ENCODE measurements at regions of chr22 and their contacts with region 1.

Region 1: DNA sequence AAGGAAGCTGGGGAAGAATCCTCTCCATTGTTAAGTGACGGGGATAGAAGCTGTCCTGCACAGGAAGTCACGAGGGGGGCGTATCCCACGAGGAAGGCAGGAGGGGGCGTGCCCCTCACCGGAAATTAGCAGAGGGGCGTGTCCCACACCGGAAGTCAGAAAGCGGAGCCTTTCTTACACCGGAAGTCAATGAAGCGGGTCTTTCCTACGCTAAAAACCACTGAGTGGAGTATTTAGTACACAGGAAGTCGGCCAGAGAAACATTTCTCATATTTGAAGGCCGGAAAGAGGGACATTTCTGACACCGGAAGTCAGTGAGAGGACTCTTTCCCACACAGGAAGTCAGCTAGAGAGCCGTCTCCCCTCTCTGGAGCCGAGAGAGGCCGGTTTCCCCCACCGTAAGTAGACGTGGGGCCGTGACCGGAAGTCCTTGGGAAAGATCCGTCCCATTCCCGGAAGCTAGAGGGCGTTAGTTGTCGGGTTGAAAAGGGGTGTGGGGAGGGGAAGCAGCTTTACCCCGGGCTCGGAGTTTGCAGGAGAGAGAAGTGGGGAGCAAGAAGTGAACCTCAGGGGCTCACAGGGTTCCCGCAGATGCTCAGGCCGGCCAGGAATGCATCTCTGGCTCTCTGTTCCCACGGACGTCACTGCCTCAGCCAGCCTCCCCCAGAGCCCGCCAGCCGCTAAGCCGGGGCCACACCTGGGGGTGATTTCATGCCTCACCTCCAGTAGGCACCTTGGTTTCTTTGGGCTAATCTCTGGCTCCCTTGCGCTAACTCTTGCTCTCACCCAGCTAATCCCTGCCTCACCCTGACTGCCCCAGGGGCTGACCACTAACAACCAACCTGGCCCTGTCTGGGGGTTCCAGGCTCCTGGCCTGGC is 15.4 kb downstream of the MIAT start:
- DNase-seq: peak; percentile 90
- ATAC-seq: peak; percentile 71
- H3K4me3 Mint-ChIP-seq: peak overlapping the region; percentile 96
- H3K27ac Mint-ChIP-seq: peak overlapping the region; percentile 98
- H3K4me1 Mint-ChIP-seq: peaks cover 59% of the 10 kb centered on the region
- H3K27me3 Mint-ChIP-seq: no peaks in the 10 kb centered on the region

Region 2: GRCh38 chr22:26428515-26429457 is 244.0 kb before region 1 on chr22 and contains the start of gene ASPHD2:
- POLR2A ChIA-PET with region 1: interaction called, 25 read pairs
- DNase-seq: peak; percentile 87
- ATAC-seq: peak; percentile 86
- H3K4me3 Mint-ChIP-seq: peak within 1 kb of the TSS; percentile 99
- H3K27ac Mint-ChIP-seq: peak within 1 kb of the TSS; percentile 100
- H3K4me1 Mint-ChIP-seq: peaks cover 44% of the 10 kb centered on the region
- H3K27me3 Mint-ChIP-seq: peaks cover 8% of the 10 kb centered on the region
- total RNA-seq, gene ASPHD2: 9.0 to 9.3 TPM

Region 3: GRCh38 chr22:26483439-26484359 is 189.1 kb before region 1 on chr22 and contains the starts of genes HPS4 and SRRD:
- POLR2A ChIA-PET with region 1: interaction called, 24 read pairs
- DNase-seq: peak; percentile 99
- ATAC-seq: peak; percentile 74
- H3K4me3 Mint-ChIP-seq: peak within 1 kb of the TSS; percentile 86
- H3K27ac Mint-ChIP-seq: peak within 1 kb of the TSS; percentile 88
- H3K4me1 Mint-ChIP-seq: peaks cover 52% of the 10 kb centered on the region
- H3K27me3 Mint-ChIP-seq: no peaks in the 10 kb centered on the region
- total RNA-seq, gene HPS4: 42.6 to 48.2 TPM
- total RNA-seq, gene SRRD: 18.9 to 19.2 TPM

Region 4: GRCh38 chr22:26502688-26503561 is 169.9 kb before region 1 on chr22:
- POLR2A ChIA-PET with region 1: interaction called, 19 read pairs
- DNase-seq: peak; percentile 76
- ATAC-seq: peak; percentile 95
- H3K4me3 Mint-ChIP-seq: peak overlapping the region; percentile 62
- H3K27ac Mint-ChIP-seq: peak overlapping the region; percentile 88
- H3K4me1 Mint-ChIP-seq: peaks cover 22% of the 10 kb centered on the region
- H3K27me3 Mint-ChIP-seq: no peaks in the 10 kb centered on the region